ENCODE measurements at regions of chr7 and their contacts with region 1.

Region 1: GRCh38 chr7:26686448-26686981 is 177.9 kb downstream of the SKAP2 start:
- DNase-seq: peak; percentile 78
- H3K4me3 ChIP-seq: no peak overlapping the region
- H3K27ac ChIP-seq: peak overlapping the region; percentile 41
- H3K27me3 ChIP-seq: no peaks in the 10 kb centered on the region
- CTCF ChIP-seq: peak; percentile 63

Region 2: GRCh38 chr7:26485367-26485934 is 201.1 kb before region 1 on chr7:
- CTCF ChIA-PET with region 1: no interaction called
- POLR2A ChIA-PET with region 1: no interaction called
- DNase-seq: no peak
- H3K4me3 ChIP-seq: no peak overlapping the region
- H3K27ac ChIP-seq: no peak overlapping the region
- H3K27me3 ChIP-seq: no peaks in the 10 kb centered on the region
- CTCF ChIP-seq: no peak

Region 3: DNA sequence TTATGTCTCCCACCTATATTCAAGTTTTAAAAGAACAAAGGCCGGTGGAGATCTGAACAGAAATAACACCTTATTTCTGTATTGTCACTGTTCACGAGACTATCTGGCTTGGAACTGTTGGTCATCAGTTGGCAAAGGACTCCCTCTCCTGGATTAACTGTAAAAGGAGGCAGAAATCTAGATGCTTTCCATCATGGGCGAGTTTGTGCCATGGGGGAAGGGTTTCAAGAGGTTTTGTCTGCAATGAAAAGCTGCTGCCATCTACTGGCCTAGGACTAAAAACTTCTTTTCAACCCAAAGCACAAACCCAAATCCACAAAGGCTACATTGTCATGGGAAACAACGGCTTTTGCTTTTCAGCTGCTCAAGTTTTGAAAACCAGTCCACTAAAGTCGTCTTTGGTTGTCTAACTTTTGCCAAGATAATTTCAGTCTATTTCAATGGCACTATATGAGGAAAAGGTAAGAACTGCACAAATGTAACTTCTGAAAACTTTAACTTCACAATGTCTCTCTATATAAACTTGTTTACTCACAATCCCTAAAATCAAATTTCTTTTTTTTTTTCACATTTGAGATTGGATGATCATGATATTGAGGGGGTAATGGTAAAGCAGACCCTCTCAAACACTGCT is 18.9 kb before region 1 on chr7:
- CTCF ChIA-PET with region 1: interaction called, 17 read pairs
- POLR2A ChIA-PET with region 1: no interaction called
- DNase-seq: peak; percentile 56
- H3K4me3 ChIP-seq: no peak overlapping the region
- H3K27ac ChIP-seq: no peak overlapping the region
- H3K27me3 ChIP-seq: no peaks in the 10 kb centered on the region
- CTCF ChIP-seq: peak; percentile 92

Region 4: DNA sequence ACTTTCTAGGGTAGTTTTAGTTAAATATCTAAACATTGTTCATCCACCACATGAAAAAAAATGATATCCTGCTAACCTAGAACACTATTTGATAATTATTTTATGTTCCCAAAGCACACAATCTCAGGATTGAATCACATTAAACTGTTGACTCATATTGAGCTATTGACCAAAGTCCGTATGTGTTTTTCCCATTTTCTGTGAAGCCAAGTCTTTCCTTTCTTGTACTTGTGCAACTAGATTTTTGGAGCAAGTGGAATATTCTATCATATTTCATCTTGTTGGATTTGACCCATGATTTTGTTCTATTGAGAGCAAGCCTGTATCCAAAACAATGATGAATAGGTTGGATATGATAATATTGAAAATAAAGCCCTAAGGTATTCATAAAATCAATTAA is 13.3 kb after region 1 on chr7:
- CTCF ChIA-PET with region 1: interaction called, 11 read pairs
- POLR2A ChIA-PET with region 1: no interaction called
- DNase-seq: no peak
- H3K4me3 ChIP-seq: no peak overlapping the region
- H3K27ac ChIP-seq: no peak overlapping the region
- H3K27me3 ChIP-seq: no peaks in the 10 kb centered on the region
- CTCF ChIP-seq: no peak

Region 5: GRCh38 chr7:26853788-26854393 is 167.4 kb after region 1 on chr7:
- CTCF ChIA-PET with region 1: interaction called, 25 read pairs
- POLR2A ChIA-PET with region 1: no interaction called
- DNase-seq: no peak
- H3K4me3 ChIP-seq: no peak overlapping the region
- H3K27ac ChIP-seq: no peak overlapping the region
- H3K27me3 ChIP-seq: no peaks in the 10 kb centered on the region
- CTCF ChIP-seq: peak; percentile 69

Region 6: DNA sequence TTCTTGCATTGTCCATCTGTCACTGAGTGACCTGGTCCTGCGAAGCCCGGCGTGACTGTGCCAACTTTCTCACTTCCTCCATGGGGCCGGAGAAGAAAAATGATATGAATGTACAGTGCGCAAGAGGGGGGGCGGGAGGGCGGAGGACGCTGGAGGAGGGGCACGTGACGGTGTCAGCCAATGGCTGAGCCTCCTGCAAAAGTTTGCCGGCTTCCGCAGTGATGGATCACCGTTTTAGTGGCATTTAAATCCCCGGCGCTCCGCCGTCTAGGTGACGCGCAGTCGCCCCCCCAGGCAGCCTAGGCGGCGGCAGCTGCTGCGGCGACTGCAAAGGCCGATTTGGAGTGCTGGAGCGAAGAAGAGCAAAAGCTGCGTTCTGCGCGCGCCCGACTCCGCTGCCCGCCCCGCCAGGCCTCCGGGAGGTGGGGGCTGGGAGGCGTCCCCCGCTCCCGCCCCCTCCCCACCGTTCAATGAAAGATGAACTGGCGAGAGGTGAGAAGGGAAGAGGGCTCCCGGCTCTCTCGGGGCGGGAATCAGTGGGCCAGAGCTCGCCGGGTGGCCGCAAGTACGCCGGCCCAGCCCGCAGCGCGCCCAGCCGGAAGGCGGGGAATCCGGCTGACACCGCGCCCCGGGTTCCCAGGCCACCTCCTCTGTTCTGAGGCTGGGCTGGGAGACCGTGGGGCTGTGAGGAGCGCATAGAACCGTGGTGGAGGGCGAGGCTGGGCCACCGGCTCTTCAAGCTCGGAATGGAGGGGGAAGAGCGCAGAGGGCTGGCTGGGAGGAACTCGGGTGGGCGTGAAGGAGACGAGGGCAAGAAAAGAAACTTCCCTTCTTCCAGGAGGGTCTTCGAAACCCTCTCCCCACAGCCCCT is 409.6 kb after region 1 on chr7 and contains the start of gene HOXA1:
- CTCF ChIA-PET with region 1: interaction called, 28 read pairs
- POLR2A ChIA-PET with region 1: no interaction called
- DNase-seq: peak; percentile 90
- H3K4me3 ChIP-seq: peak within 1 kb of the TSS; percentile 91
- H3K27ac ChIP-seq: peak within 1 kb of the TSS; percentile 94
- H3K27me3 ChIP-seq: no peaks in the 10 kb centered on the region
- CTCF ChIP-seq: no peak
- polyA plus RNA-seq, gene HOXA1: 2.6 and 2.9 TPM in 2 replicates

Region 7: DNA sequence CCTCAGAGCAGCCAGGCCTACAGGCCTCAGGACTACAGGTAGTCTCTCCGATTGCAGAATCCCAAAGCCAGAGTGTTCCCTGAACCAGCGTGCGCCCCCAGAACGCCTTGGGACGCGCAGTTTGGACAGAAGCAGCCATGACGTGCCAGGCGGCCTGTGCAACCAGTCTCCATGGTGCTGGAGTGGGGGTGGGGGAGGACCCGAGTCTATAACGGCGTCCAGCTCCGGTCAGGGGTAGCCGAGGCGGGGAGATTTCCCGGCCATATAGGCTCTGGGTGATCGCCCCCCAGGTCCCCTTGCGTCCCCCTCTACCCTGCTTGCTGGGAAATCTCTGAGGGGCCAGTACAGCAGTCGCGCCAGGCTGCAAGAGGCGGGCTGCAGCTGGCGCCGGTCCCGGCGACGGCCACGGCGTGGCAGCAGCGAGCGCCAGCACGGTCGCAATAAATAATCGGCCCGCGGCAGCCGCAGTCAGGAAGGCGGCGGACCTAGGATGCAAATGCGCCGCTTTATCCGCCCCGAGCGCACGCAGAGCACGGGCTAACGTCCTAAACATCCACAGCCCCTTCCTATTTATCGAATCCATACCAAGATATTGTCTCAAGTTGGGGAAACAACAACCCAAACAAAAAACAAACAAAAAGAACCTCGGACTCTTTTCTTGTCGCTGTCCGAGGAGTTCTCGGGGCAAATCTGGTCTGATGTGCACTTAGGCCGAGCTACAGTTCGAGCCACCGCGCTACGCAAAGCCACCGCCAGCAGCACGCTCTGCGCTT is 464.2 kb after region 1 on chr7:
- CTCF ChIA-PET with region 1: interaction called, 13 read pairs
- POLR2A ChIA-PET with region 1: no interaction called
- DNase-seq: no peak
- H3K4me3 ChIP-seq: peak overlapping the region; percentile 73
- H3K27ac ChIP-seq: peak overlapping the region; percentile 69
- H3K27me3 ChIP-seq: peaks cover 3% of the 10 kb centered on the region
- CTCF ChIP-seq: peak; percentile 79

Region 8: GRCh38 chr7:27160546-27161213 is 474.2 kb after region 1 on chr7:
- CTCF ChIA-PET with region 1: interaction called, 30 read pairs
- POLR2A ChIA-PET with region 1: no interaction called
- DNase-seq: peak; percentile 64
- H3K4me3 ChIP-seq: peak overlapping the region; percentile 62
- H3K27ac ChIP-seq: no peak overlapping the region
- H3K27me3 ChIP-seq: peaks cover 26% of the 10 kb centered on the region
- CTCF ChIP-seq: peak; percentile 96